Naive thymus-derived CD4-positive, alpha-beta T cell (primary cell): ENCODE measurements at regions of chr2 and their contacts with region 1.

Region 1: DNA sequence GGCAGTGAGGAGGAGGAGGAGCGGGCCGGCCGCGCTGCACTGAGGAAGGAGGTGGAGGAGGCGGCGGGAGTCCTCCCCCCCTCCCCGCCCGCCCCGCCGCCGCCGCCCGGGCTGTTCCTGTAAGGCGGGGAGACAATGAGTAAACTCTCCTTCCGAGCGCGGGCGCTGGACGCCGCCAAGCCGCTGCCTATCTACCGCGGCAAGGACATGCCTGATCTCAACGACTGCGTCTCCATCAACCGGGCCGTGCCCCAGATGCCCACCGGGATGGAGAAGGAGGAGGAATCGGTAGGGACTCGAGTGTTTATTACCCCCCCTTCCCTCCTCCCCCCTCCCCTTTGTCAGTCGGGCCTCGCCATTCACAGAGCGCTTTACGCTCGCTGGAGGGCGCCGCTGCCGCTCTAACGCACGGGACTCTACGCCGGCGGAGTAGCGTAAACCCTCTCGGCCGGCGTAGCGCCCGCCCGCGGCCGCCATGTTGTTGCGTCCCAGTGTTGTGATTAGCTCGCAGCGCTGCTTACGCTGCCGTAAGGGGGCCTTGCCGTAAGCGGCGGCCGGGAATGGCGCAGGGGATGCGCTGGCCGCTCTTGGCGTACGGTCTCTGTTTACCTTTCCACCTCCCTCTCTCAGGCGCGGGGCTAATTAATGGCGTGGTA is 460 bp downstream of the EPC2 start:
- DNase-seq: peak; percentile 90 to 99 (median 95)
- ATAC-seq: peak; percentile 84
- H3K4me3 ChIP-seq: peak overlapping the region; percentile 69
- H3K4me3 Mint-ChIP-seq: peak overlapping the region; percentile 79 to 99 (median 96)
- H3K27ac ChIP-seq: peak overlapping the region; percentile 94
- H3K27ac Mint-ChIP-seq: peak overlapping the region; percentile 81 to 99 (median 97)
- H3K4me1 ChIP-seq: peaks cover 21 to 22% of the 10 kb centered on the region in 2 donors
- H3K4me1 Mint-ChIP-seq: peaks cover 32 to 48% (median 37%) of the 10 kb centered on the region in 7 donors
- H3K27me3 ChIP-seq: no peaks in the 10 kb centered on the region
- H3K27me3 Mint-ChIP-seq: peaks cover 0 to 12% (median 0%) of the 10 kb centered on the region in 5 donors

Region 2: DNA sequence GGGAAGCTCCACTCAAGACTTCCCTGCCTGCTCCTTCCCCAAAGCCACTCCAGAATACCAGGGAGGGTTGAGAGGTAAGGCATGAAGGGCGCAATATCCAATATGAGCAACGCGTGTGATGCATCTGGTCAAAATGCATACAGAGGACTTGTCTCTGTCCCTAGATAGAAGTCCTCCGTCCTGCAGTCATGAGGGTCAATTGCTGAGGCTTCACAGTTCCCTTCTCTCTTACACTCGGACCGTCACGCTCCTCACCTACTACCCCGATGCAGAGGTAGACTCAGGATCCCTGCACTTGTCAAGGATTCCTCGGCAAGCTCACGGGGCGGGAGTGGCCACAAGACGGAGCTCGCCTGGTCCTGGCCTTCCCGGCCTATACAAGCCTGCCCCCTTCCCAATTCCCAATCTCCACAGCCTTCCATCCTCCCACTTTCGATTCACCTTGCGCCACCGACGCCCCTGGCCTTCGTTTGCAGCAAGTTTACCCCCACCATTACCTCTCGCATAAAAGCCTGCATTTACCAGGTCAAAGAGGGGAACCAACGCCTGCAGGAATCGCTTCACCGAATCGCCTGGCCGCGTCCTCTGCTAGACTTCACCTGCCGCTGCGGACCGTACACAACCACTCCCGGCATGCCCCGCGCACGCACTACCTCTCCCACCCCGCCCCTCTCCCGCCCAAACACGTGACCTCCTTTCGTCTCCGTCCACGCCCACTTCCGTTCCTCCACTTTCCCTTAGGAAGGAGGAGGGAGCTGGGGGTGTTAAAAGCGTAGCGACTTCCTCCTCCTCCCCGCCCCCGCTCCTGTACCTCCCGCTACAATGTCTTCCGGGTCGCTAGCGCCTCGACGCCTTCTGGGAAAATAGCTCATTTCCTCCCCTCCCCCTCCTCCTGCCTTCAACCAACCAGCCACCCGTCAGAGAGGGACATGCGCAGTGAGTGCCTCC is 624.6 kb before region 1 on chr2 and contains the start of gene ORC4:
- CTCF ChIA-PET with region 1: no interaction called
- POLR2A ChIA-PET with region 1: interaction called, 31 read pairs
- intact Hi-C with region 1: loop called (anchors 1 kb)
- DNase-seq: peak; percentile 70 to 98 (median 97)
- ATAC-seq: peak; percentile 94
- H3K4me3 ChIP-seq: peak within 1 kb of the TSS; percentile 89
- H3K4me3 Mint-ChIP-seq: peak within 1 kb of the TSS; percentile 92 to 100 (median 98)
- H3K27ac ChIP-seq: peak within 1 kb of the TSS; percentile 91
- H3K27ac Mint-ChIP-seq: peak within 1 kb of the TSS; percentile 89 to 99 (median 97)
- H3K4me1 ChIP-seq: peaks cover 20 to 36% of the 10 kb centered on the region in 2 donors
- H3K4me1 Mint-ChIP-seq: peaks cover 27 to 84% (median 70%) of the 10 kb centered on the region in 7 donors
- H3K27me3 ChIP-seq: no peaks in the 10 kb centered on the region
- H3K27me3 Mint-ChIP-seq: no peaks in the 10 kb centered on the region
- total RNA-seq, gene ORC4: 34.1 to 63.7 (median 44.8) TPM

Region 3: GRCh38 chr2:148263890-148264289 is 381.1 kb before region 1 on chr2:
- CTCF ChIA-PET with region 1: no interaction called
- POLR2A ChIA-PET with region 1: no interaction called
- intact Hi-C with region 1: no loop called
- DNase-seq: no peak
- ATAC-seq: no peak
- H3K4me3 ChIP-seq: no peak overlapping the region
- H3K4me3 Mint-ChIP-seq: no peak overlapping the region
- H3K27ac ChIP-seq: no peak overlapping the region
- H3K27ac Mint-ChIP-seq: no peak overlapping the region
- H3K4me1 ChIP-seq: no peaks in the 10 kb centered on the region
- H3K4me1 Mint-ChIP-seq: peaks cover 0 to 7% (median 0%) of the 10 kb centered on the region in 7 donors
- H3K27me3 ChIP-seq: no peaks in the 10 kb centered on the region
- H3K27me3 Mint-ChIP-seq: peaks cover 0 to 2% (median 0%) of the 10 kb centered on the region in 5 donors

Region 4: GRCh38 chr2:148552675-148553331 is 92.2 kb before region 1 on chr2:
- CTCF ChIA-PET with region 1: interaction called, 3 read pairs
- POLR2A ChIA-PET with region 1: interaction called, 25 read pairs
- intact Hi-C with region 1: loop called (anchors 1 kb)
- DNase-seq: peak in 7 of 9 donors; percentile 18 to 64 (median 53)
- ATAC-seq: peak; percentile 77
- H3K4me3 ChIP-seq: peak overlapping the region; percentile 75
- H3K4me3 Mint-ChIP-seq: no peak overlapping the region
- H3K27ac ChIP-seq: peak overlapping the region; percentile 70
- H3K27ac Mint-ChIP-seq: no peak overlapping the region
- H3K4me1 ChIP-seq: peaks cover 5 to 12% of the 10 kb centered on the region in 2 donors
- H3K4me1 Mint-ChIP-seq: peaks cover 1 to 13% (median 7%) of the 10 kb centered on the region in 7 donors
- H3K27me3 ChIP-seq: no peaks in the 10 kb centered on the region
- H3K27me3 Mint-ChIP-seq: no peaks in the 10 kb centered on the region

Region 5: GRCh38 chr2:148667113-148667836 is 22.3 kb after region 1 on chr2:
- CTCF ChIA-PET with region 1: no interaction called
- POLR2A ChIA-PET with region 1: interaction called, 12 read pairs
- intact Hi-C with region 1: no loop called
- DNase-seq: no peak
- ATAC-seq: peak; percentile 54
- H3K4me3 ChIP-seq: no peak overlapping the region
- H3K4me3 Mint-ChIP-seq: peak overlapping the region in 9 of 10 donors; percentile 35 to 78 (median 67)
- H3K27ac ChIP-seq: no peak overlapping the region
- H3K27ac Mint-ChIP-seq: peak overlapping the region in 7 of 9 donors; percentile 28 to 85 (median 58)
- H3K4me1 ChIP-seq: peaks cover 10 to 42% of the 10 kb centered on the region in 2 donors
- H3K4me1 Mint-ChIP-seq: peaks cover 46 to 96% (median 85%) of the 10 kb centered on the region in 7 donors
- H3K27me3 ChIP-seq: no peaks in the 10 kb centered on the region
- H3K27me3 Mint-ChIP-seq: no peaks in the 10 kb centered on the region

Region 6: GRCh38 chr2:148874868-148875341 is 229.9 kb after region 1 on chr2 and contains the start of gene KIF5C:
- CTCF ChIA-PET with region 1: no interaction called
- POLR2A ChIA-PET with region 1: interaction called, 6 read pairs
- intact Hi-C with region 1: loop called (anchors 1 kb)
- DNase-seq: peak; percentile 67 to 83 (median 76)
- ATAC-seq: peak; percentile 95
- H3K4me3 ChIP-seq: peak within 1 kb of the TSS; percentile 45
- H3K4me3 Mint-ChIP-seq: peak within 1 kb of the TSS; percentile 77 to 89 (median 86)
- H3K27ac ChIP-seq: no peak within 1 kb of the TSS
- H3K27ac Mint-ChIP-seq: peak within 1 kb of the TSS in 6 of 9 donors; percentile 4 to 82 (median 72)
- H3K4me1 ChIP-seq: peaks cover 5 to 6% of the 10 kb centered on the region in 2 donors
- H3K4me1 Mint-ChIP-seq: peaks cover 0 to 19% (median 14%) of the 10 kb centered on the region in 7 donors
- H3K27me3 ChIP-seq: no peaks in the 10 kb centered on the region
- H3K27me3 Mint-ChIP-seq: peaks cover 8 to 33% (median 28%) of the 10 kb centered on the region in 5 donors
- total RNA-seq, gene KIF5C: 3.6 to 14.3 (median 6.8) TPM

Region 7: DNA sequence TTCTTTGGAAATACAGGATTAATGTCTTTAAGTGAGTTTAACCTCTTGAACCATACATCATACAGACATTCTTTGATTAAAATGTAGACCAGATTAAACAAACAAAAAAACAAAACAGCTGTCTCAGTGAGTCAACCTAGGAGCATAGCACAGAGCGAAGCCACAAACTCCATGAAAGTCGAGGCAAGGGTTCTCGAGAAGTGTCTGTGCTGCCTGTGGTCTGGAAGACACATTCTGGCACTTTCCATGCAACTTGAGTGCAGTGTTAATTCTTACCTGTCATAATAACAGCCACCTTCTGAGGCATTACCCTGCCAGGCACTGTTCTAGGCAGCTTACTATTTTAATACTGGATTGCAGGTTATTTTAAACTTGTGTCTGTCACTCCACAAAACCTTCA is 1378.0 kb after region 1 on chr2:
- CTCF ChIA-PET with region 1: no interaction called
- POLR2A ChIA-PET with region 1: no interaction called
- intact Hi-C with region 1: loop called in 1 of 2 experiments (anchors 10 kb)
- DNase-seq: peak in 5 of 9 donors; percentile 16 to 46 (median 27)
- ATAC-seq: peak; percentile 42
- H3K4me3 ChIP-seq: no peak overlapping the region
- H3K4me3 Mint-ChIP-seq: no peak overlapping the region
- H3K27ac ChIP-seq: no peak overlapping the region
- H3K27ac Mint-ChIP-seq: no peak overlapping the region
- H3K4me1 ChIP-seq: no peaks in the 10 kb centered on the region
- H3K4me1 Mint-ChIP-seq: no peaks in the 10 kb centered on the region
- H3K27me3 ChIP-seq: no peaks in the 10 kb centered on the region
- H3K27me3 Mint-ChIP-seq: no peaks in the 10 kb centered on the region